Astrocyte of the cerebellum (primary cell): ENCODE measurements at regions of chr12 and their contacts with region 1.

Region 1: GRCh38 chr12:108228746-108229145 is 99.7 kb downstream of the WSCD2 start:
- DNase-seq: no peak
- H3K4me3 ChIP-seq: no peak overlapping the region
- CTCF ChIP-seq: no peak

Region 2: GRCh38 chr12:108175310-108175709 is 53.4 kb before region 1 on chr12:
- in situ Hi-C with region 1: no loop called
- DNase-seq: no peak
- H3K4me3 ChIP-seq: no peak overlapping the region
- CTCF ChIP-seq: no peak

Region 3: DNA sequence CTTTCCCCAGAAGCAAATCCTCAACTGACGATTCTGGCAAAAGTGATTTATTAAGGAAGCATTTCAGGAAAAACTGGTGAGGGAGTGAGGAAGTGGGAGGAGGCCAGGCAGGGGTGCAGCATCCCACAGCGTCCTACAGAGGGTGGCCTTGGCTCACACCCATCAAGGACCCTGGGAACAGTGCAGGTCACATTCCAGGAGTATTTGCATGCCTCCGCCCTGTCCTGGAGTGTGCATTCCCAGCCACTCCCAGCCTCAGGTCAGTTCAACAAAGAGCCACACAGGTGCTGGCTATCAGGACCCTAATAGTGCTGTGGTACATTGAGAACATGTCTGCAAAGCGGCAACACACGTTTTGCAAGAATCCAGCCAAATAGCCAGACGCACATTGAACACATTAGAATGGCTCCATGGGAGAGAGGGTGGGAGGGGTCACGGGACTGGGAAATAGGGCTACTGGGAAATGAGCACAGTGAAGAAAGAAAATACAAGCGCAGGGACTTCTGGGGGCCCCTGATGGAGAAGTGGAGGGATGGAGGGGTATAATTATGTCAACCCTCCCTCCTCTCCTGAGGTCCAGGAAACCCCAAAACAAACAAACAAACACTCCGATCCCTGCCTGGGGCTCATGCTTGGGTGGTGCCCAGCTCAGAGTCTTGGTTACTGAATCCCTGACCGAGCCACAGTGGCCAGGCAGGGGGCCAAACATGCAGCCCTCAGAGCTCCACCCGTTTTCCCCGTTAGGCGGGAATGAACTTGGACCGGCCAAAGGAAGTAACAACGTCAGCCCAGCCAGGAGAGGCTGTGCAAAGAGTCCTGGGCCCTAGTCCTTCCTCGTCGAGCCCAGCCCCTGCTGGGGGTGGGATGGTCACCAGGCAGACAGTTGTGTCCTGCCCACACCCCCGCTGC is 73.9 kb after region 1 on chr12:
- in situ Hi-C with region 1: loop called (anchors 5 kb)
- DNase-seq: peak; percentile 44
- H3K4me3 ChIP-seq: no peak overlapping the region
- CTCF ChIP-seq: no peak